Posterior vena cava (tissue), 2 donors: ENCODE measurements at regions of chr10 and their contacts with region 1.

Region 1: DNA sequence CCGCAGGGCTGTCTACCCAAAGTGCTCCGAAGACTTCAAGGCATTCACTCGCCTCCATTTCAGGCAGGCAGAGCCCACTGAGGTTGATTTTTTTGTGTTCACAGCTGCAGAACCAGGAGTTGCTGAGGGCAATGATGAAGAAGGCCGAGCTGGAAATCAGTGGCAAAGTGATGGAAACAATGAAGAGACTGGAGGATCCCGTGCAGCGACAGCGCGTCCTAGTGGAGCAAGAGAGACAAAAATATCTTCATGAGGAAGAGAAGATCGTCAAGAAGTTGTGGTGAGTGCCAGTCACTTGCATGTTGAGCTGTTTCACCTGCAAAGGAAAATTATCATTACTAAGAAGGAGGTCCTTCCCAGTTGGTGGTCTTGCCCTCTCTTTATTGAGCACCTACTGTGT is 210.5 kb downstream of the ARHGAP21 start:
- DNase-seq: no peak

Region 2: GRCh38 chr10:24465891-24466818 is 47.0 kb before region 1 on chr10:
- intact Hi-C with region 1: loop called in 1 of 2 experiments (anchors 1 kb)
- DNase-seq: no peak